A673 (cell line): ENCODE measurements at regions of chr2 and their contacts with region 1.

Region 1: DNA sequence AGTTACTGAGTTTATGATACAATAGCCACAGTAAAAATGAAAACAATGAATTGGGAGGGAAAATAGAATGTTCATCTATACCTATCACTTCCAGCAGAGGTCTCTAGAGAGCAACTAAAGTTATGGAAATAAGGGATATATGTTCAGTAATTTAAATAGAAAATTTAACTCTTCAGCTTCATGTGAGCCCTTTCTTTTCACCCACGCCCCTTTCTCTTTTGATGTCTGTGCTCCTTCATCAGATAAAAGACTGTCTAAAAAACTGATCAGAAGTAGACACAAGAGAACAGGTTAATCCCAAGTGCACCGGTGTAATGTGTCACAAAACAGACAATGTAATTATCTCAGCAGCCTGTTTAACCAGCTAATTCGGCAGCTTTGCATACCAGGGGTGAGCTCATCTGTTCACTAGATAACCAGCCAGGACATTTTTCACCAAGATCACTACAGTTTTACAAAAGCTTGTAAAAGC is 238.5 kb upstream of the ERBB4 start:
- DNase-seq: peak; percentile 78
- H3K4me3 ChIP-seq: no peak overlapping the region
- H3K27ac ChIP-seq: peak overlapping the region; percentile 17
- H3K4me1 ChIP-seq: peaks cover 32% of the 10 kb centered on the region
- H3K27me3 ChIP-seq: no peaks in the 10 kb centered on the region
- CTCF ChIP-seq: peak; percentile 75

Region 2: DNA sequence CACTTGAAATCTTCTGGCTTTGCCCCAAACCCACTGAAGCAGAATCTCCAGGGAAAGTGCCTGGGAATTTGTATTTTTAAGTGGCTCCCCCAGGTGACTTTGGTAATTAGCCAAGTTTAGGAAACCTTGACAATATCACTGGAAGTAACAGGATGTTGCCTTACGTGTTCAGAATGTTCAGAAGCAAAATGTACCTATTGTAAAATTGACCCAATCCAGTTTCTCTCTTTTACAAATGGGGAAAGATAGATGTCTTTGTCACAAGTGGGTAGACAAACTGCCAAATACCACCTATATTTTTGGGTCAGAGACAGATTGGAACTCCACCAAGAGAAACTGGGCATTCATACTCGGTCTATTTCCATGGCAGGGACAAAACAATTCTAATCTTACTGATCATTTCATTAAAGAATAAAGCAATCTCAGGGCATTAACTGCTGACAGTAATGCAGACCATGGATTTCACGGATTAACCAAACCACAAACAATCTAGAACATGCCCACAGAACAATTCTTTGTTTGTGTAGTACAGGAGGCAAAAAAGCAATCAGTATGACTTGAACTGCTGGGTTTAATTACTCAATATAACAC is 494.3 kb before region 1 on chr2:
- CTCF ChIA-PET with region 1: no interaction called
- POLR2A ChIA-PET with region 1: no interaction called
- intact Hi-C with region 1: no loop called
- DNase-seq: peak; percentile 18
- H3K4me3 ChIP-seq: no peak overlapping the region
- H3K27ac ChIP-seq: no peak overlapping the region
- H3K4me1 ChIP-seq: peaks cover 21% of the 10 kb centered on the region
- H3K27me3 ChIP-seq: no peaks in the 10 kb centered on the region
- CTCF ChIP-seq: no peak

Region 3: DNA sequence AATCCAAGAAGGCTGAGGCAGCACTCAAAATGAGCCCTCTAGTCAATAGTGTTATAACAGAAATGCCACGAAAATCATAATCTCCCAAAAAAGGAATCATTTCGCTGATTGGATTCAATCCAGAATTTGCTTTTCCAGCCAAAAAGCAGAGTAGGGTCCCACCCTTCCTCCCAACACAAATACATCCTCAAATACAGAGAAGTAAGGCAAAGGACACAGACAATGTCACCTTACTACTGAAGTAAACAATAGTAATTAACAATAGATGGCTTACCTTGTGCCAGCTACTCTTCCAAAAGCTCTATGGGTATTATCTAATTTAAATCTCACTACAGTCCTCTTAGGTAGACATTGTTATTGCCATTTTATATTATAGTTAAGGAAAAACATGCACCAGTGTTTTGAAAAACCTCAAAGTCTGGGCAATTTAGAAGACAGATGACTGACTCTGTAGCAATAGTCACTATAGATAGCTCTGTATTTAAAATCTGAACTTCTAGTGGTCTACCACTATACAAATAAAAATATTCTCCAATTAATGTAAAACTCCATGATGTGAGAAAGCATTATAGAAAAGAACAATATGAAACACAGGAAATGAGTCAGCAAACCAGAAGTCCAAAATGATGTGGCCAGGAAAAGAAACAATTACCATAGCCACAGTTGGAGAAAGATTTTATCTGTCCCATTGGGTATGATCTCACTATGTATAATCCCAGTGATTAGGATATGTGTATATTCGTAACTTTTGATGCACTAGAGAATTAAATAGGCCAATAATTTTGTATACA is 66.5 kb after region 1 on chr2:
- CTCF ChIA-PET with region 1: no interaction called
- POLR2A ChIA-PET with region 1: no interaction called
- intact Hi-C with region 1: loop called (anchors 5 kb)
- DNase-seq: peak; percentile 94
- H3K4me3 ChIP-seq: no peak overlapping the region
- H3K27ac ChIP-seq: peak overlapping the region; percentile 77
- H3K4me1 ChIP-seq: peaks cover 24% of the 10 kb centered on the region
- H3K27me3 ChIP-seq: no peaks in the 10 kb centered on the region
- CTCF ChIP-seq: no peak

Region 4: GRCh38 chr2:212892193-212892592 is 115.1 kb after region 1 on chr2:
- CTCF ChIA-PET with region 1: interaction called, 11 read pairs
- POLR2A ChIA-PET with region 1: no interaction called
- intact Hi-C with region 1: loop called (anchors 1 kb)
- DNase-seq: peak; percentile 85
- H3K4me3 ChIP-seq: no peak overlapping the region
- H3K27ac ChIP-seq: no peak overlapping the region
- H3K4me1 ChIP-seq: peaks cover 26% of the 10 kb centered on the region
- H3K27me3 ChIP-seq: no peaks in the 10 kb centered on the region
- CTCF ChIP-seq: peak; percentile 68

Region 5: GRCh38 chr2:212979799-212980198 is 202.7 kb after region 1 on chr2:
- CTCF ChIA-PET with region 1: no interaction called
- POLR2A ChIA-PET with region 1: no interaction called
- intact Hi-C with region 1: no loop called
- DNase-seq: no peak
- H3K4me3 ChIP-seq: no peak overlapping the region
- H3K27ac ChIP-seq: no peak overlapping the region
- H3K4me1 ChIP-seq: peaks cover 18% of the 10 kb centered on the region
- H3K27me3 ChIP-seq: no peaks in the 10 kb centered on the region
- CTCF ChIP-seq: no peak

Region 6: DNA sequence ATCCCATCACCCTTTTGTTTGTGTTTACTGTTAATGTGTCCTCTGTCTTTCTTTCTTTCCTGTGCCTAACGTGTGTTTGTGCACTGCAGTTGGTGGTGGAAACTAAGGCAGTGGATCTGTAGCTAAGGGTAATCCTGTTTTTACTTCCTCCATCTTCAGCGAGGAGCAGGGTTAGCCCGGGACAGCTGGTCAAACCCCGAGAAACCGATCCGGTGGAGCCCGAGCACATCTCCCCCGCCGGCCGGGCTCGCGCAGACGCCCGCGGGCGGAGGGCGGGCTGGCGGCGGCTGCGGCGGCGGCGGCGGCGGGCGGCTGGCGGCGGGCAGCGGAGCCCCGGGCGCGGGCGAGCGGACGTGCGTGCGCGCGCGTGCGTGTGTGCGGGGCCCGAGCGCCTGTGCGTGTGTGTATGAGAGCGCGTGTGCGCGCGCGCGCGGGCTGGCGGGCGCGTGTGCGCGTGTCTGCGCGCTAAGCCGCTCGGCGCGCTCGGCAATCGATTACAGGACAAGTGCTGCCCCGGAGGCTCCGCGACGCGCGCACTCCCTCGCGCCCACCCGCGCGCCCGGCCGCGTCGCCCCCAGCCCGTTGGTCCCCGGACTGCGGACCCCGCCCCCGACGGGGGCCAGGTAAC is 374.5 kb after region 1 on chr2 and contains the start of gene IKZF2:
- CTCF ChIA-PET with region 1: no interaction called
- POLR2A ChIA-PET with region 1: no interaction called
- intact Hi-C with region 1: loop called (anchors 1 kb)
- DNase-seq: peak; percentile 96
- H3K4me3 ChIP-seq: peak within 1 kb of the TSS; percentile 75
- H3K27ac ChIP-seq: peak within 1 kb of the TSS; percentile 88
- H3K4me1 ChIP-seq: peaks cover 29% of the 10 kb centered on the region
- H3K27me3 ChIP-seq: no peaks in the 10 kb centered on the region
- CTCF ChIP-seq: no peak
- total RNA-seq, gene IKZF2: 68.6 and 69.5 TPM in 2 replicates

Region 7: GRCh38 chr2:213251618-213252017 is 474.6 kb after region 1 on chr2:
- CTCF ChIA-PET with region 1: no interaction called
- POLR2A ChIA-PET with region 1: no interaction called
- intact Hi-C with region 1: loop called (anchors 5 kb)
- DNase-seq: peak; percentile 87
- H3K4me3 ChIP-seq: no peak overlapping the region
- H3K27ac ChIP-seq: no peak overlapping the region
- H3K4me1 ChIP-seq: peaks cover 22% of the 10 kb centered on the region
- H3K27me3 ChIP-seq: no peaks in the 10 kb centered on the region
- CTCF ChIP-seq: peak; percentile 65